PC-3 (cell line): ENCODE measurements at regions of chr11 and their contacts with region 1.

Region 1: GRCh38 chr11:110529043-110529442 is 99.3 kb downstream of the FDX1 start:
- DNase-seq: peak; percentile 69
- ATAC-seq: peak; percentile 56
- H3K4me3 ChIP-seq: no peak overlapping the region
- H3K27ac ChIP-seq: no peak overlapping the region
- H3K4me1 ChIP-seq: no peaks in the 10 kb centered on the region
- H3K27me3 ChIP-seq: peaks cover 29% of the 10 kb centered on the region; the same call in 1 of the 2 replicates
- CTCF ChIP-seq: peak; percentile 77

Region 2: GRCh38 chr11:110433400-110434333 is 95.4 kb before region 1 on chr11:
- CTCF ChIA-PET with region 1: no interaction called
- POLR2A ChIA-PET with region 1: no interaction called
- intact Hi-C with region 1: no loop called
- DNase-seq: peak; percentile 58
- ATAC-seq: no peak
- H3K4me3 ChIP-seq: no peak overlapping the region
- H3K27ac ChIP-seq: no peak overlapping the region
- H3K4me1 ChIP-seq: peaks cover 27% of the 10 kb centered on the region
- H3K27me3 ChIP-seq: no peaks in the 10 kb centered on the region
- CTCF ChIP-seq: peak; percentile 83

Region 3: DNA sequence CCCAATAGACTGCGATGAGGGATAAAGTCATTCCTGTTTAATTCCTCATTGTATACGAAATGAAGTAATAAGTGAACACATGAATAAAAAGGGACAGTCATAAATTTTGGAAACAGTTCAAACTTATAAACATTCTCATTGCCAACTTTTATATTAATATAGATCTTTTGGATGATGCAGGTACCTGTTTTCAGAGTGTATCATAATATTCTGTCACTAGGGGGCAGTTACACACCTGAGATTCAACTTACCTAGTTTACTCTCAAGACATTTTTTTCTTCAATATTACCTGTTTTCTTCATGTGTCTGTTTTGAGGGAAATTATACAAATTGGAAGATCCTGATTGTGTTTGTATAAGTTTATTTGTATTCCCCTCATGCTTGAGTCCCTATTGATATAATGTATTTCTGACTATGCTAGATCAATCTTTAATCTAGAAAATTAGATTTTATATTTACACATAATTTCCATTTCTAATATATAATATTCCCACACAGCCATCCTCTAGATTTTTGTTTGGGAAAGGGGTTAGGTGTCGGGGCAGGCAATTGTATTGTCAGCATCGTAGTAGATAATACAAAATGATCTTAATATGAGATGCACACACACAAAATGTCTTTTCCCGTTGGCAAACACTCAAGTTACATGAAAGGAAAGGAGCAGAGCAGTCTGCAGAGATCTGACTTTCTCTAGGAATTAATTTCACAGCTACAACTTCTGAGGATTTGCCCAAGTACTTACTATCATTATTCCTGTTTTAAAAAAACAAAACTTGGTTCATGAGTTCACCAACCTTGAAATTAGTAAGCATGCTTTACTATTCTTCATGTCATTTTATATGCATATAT is 80.9 kb before region 1 on chr11:
- CTCF ChIA-PET with region 1: no interaction called
- POLR2A ChIA-PET with region 1: no interaction called
- intact Hi-C with region 1: loop called (anchors 1 kb)
- DNase-seq: peak; percentile 88
- ATAC-seq: peak; percentile 49; the same call in 1 of the 2 replicates
- H3K4me3 ChIP-seq: no peak overlapping the region
- H3K27ac ChIP-seq: peak overlapping the region; percentile 79
- H3K4me1 ChIP-seq: peaks cover 21% of the 10 kb centered on the region
- H3K27me3 ChIP-seq: no peaks in the 10 kb centered on the region
- CTCF ChIP-seq: peak; percentile 90